ENCODE measurements at regions of chr7 and their contacts with region 1.

Region 1: GRCh38 chr7:82373926-82374640 is 69.5 kb downstream of the CACNA2D1 start:
- DNase-seq: no peak
- H3K4me3 Mint-ChIP-seq: no peak overlapping the region
- H3K27ac Mint-ChIP-seq: no peak overlapping the region
- H3K4me1 Mint-ChIP-seq: no peaks in the 10 kb centered on the region
- H3K27me3 Mint-ChIP-seq: no peaks in the 10 kb centered on the region

Region 2: DNA sequence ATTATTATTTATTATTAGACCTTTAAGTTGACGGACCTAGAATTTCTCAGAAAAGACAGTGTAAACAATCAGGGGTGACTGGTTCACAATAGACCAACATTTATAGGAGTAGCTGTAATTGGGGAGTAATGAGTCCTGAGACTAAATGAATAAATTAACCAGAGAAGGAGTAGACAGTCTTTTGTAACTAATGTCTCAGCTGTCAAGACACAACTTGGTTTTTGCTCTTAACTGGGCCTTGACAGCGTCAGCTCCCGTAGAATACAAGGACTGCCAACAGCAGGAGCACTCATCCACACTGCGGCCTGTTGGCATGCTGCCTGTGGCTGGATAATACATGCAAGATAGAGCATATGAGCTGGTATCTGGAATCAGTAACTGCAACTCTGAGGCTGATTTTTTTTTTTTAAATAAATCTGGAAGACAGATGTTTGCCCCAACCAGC is 54.4 kb before region 1 on chr7:
- intact Hi-C with region 1: loop called (anchors 10 kb)
- DNase-seq: no peak
- H3K4me3 Mint-ChIP-seq: no peak overlapping the region
- H3K27ac Mint-ChIP-seq: no peak overlapping the region
- H3K4me1 Mint-ChIP-seq: no peaks in the 10 kb centered on the region
- H3K27me3 Mint-ChIP-seq: no peaks in the 10 kb centered on the region

Measured in activated T-helper 2 cell treated with anti-CD3 and anti-CD28 coated beads, Interferon-gamma antibody, Interleukin-2, Interleukin-4, amounts not matched to agents 10 μg/mL and 5 μg/mL and 100 μg/mL, durations not matched to agents 14 hours and 24 hours and 36 hours (primary cell).